GM12878 (cell line): ENCODE measurements at regions of chr17 and their contacts with region 1.

Region 1: GRCh38 chr17:33674685-33675084 is 381.6 kb upstream of the ASIC2 start:
- DNase-seq: peak; percentile 19
- ATAC-seq: peak; percentile 96
- H3K4me3 ChIP-seq: no peak overlapping the region
- H3K27ac ChIP-seq: no peak overlapping the region
- H3K4me1 ChIP-seq: no peaks in the 10 kb centered on the region
- H3K27me3 ChIP-seq: no peaks in the 10 kb centered on the region
- CTCF ChIP-seq: peak; percentile 77 to 80 (median 79)
- EP300 ChIP-seq: no peak
- POLR2A ChIP-seq: no peak
- RAD21 ChIP-seq: peak; percentile 69

Region 2: GRCh38 chr17:33506889-33507650 is 167.6 kb before region 1 on chr17:
- CTCF ChIA-PET with region 1: interaction called, 3 read pairs
- POLR2A ChIA-PET with region 1: no interaction called
- RAD21 ChIA-PET with region 1: no interaction called
- SMC1A ChIA-PET with region 1: no interaction called
- in situ Hi-C with region 1: loop called (anchors 10 kb)
- intact Hi-C with region 1: no loop called
- DNase-seq: no peak
- ATAC-seq: peak; percentile 48
- H3K4me3 ChIP-seq: no peak overlapping the region
- H3K27ac ChIP-seq: no peak overlapping the region
- H3K4me1 ChIP-seq: no peaks in the 10 kb centered on the region
- H3K27me3 ChIP-seq: no peaks in the 10 kb centered on the region
- CTCF ChIP-seq: no peak
- EP300 ChIP-seq: no peak
- POLR2A ChIP-seq: no peak
- RAD21 ChIP-seq: no peak

Region 3: DNA sequence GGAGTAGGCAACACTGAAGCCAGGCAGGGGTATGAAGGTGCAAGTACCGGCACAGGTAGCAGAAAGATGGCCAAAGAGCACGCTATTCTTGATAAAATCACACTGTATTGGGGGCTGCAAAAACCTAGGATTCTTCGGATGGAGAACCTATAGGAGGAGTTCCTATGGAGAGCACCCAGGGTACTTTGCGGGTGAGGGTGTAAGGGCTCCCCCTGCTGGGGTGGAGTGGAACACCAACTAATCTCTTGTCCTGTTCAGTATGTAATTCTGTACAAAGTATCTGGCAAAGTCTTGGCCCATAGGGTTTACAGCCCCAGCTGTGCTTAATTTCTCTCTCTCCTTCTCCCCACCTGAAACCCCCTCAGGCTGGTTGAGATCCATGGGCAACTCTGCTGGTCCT is 11.5 kb after region 1 on chr17:
- CTCF ChIA-PET with region 1: interaction called, 32 read pairs
- POLR2A ChIA-PET with region 1: no interaction called
- RAD21 ChIA-PET with region 1: interaction called, 3 read pairs
- SMC1A ChIA-PET with region 1: no interaction called
- in situ Hi-C with region 1: no loop called
- intact Hi-C with region 1: no loop called
- DNase-seq: no peak
- ATAC-seq: peak; percentile 61; the same call in 2 of the 3 replicates
- H3K4me3 ChIP-seq: no peak overlapping the region
- H3K27ac ChIP-seq: no peak overlapping the region
- H3K4me1 ChIP-seq: no peaks in the 10 kb centered on the region
- H3K27me3 ChIP-seq: no peaks in the 10 kb centered on the region
- CTCF ChIP-seq: peak; percentile 41 to 50 (median 48); a peak in 5 of 6 replicates
- EP300 ChIP-seq: no peak
- POLR2A ChIP-seq: no peak
- RAD21 ChIP-seq: no peak

Region 4: DNA sequence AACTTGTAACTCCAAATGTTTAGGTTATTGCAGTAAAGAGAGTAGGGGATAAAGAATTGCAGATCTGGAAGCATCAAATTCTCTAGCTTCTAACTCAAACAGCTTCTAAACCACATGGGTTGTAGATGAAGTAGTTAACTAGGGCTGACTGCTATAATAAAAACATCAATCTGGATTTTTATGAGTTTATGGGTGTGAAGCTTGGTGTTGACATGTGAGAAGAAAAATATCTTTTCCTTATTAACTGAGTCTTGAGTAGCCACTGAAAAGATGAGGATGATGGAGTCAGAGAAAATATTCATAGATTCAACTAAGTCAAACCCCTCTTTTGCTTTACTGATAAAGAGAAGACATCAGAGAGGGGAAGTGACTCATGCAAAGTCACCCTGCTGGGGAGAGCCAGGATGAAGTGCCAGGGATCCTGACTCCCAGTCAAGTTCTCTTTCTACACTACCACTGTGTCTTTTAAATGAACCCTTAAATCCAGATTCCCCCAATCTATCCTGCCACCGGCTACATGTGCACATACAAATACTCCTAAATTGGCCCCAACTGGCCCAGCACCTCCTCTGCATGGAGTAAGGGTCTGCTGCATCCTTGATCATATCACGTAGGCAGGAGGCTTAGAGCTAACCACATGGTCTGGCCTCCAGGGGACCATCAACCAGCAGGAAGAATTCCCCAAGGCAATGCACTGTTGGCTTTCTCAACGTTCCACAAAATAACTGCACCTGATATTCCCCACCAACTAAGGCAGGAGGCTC is 316.4 kb after region 1 on chr17:
- CTCF ChIA-PET with region 1: no interaction called
- POLR2A ChIA-PET with region 1: no interaction called
- RAD21 ChIA-PET with region 1: no interaction called
- SMC1A ChIA-PET with region 1: no interaction called
- in situ Hi-C with region 1: no loop called
- intact Hi-C with region 1: no loop called
- DNase-seq: no peak
- ATAC-seq: no peak
- H3K4me3 ChIP-seq: no peak overlapping the region
- H3K27ac ChIP-seq: no peak overlapping the region
- H3K4me1 ChIP-seq: no peaks in the 10 kb centered on the region
- H3K27me3 ChIP-seq: no peaks in the 10 kb centered on the region
- CTCF ChIP-seq: no peak
- EP300 ChIP-seq: no peak
- POLR2A ChIP-seq: no peak
- RAD21 ChIP-seq: no peak